MCF 10A (cell line): ENCODE measurements at regions of chr4 and their contacts with region 1.

Region 1: DNA sequence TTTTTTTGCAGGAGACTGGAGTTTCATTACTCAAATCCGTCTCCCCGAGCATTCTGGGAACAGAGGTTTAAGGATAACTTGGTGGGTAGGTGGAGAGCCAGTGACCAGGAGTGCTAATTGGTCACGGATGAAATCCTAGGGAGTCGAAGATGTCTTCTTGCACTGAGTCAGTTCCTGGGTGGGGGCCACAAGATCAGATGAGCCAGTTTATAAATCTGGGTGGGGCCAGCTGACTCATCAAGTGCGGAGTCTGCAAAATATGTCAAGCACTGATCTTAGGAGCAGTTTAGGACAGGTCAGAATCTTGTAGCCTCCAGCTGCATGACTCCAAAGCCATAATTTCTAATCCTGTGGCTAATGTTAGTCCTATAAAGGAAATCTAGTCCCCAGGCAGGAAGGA is 741.3 kb downstream of the PCDH7 start:
- DNase-seq: peak; percentile 75
- H3K4me3 Mint-ChIP-seq: peak overlapping the region; percentile 24
- H3K27ac Mint-ChIP-seq: peak overlapping the region; percentile 18
- H3K4me1 Mint-ChIP-seq: peaks cover 11% of the 10 kb centered on the region
- H3K27me3 Mint-ChIP-seq: no peaks in the 10 kb centered on the region
- CTCF ChIP-seq: no peak

Region 2: GRCh38 chr4:31474221-31474620 is 12.8 kb after region 1 on chr4:
- CTCF ChIA-PET with region 1: no interaction called
- POLR2A ChIA-PET with region 1: no interaction called
- intact Hi-C with region 1: no loop called
- DNase-seq: no peak
- H3K4me3 Mint-ChIP-seq: no peak overlapping the region
- H3K27ac Mint-ChIP-seq: no peak overlapping the region
- H3K4me1 Mint-ChIP-seq: no peaks in the 10 kb centered on the region
- H3K27me3 Mint-ChIP-seq: no peaks in the 10 kb centered on the region
- CTCF ChIP-seq: no peak

Region 3: GRCh38 chr4:32010221-32010620 is 548.8 kb after region 1 on chr4:
- CTCF ChIA-PET with region 1: no interaction called
- POLR2A ChIA-PET with region 1: no interaction called
- intact Hi-C with region 1: no loop called
- DNase-seq: no peak
- H3K4me3 Mint-ChIP-seq: no peak overlapping the region
- H3K27ac Mint-ChIP-seq: no peak overlapping the region
- H3K4me1 Mint-ChIP-seq: no peaks in the 10 kb centered on the region
- H3K27me3 Mint-ChIP-seq: no peaks in the 10 kb centered on the region
- CTCF ChIP-seq: no peak

Region 4: GRCh38 chr4:32258986-32259385 is 797.6 kb after region 1 on chr4:
- CTCF ChIA-PET with region 1: no interaction called
- POLR2A ChIA-PET with region 1: no interaction called
- intact Hi-C with region 1: loop called (anchors 5 kb)
- DNase-seq: no peak
- H3K4me3 Mint-ChIP-seq: no peak overlapping the region
- H3K27ac Mint-ChIP-seq: no peak overlapping the region
- H3K4me1 Mint-ChIP-seq: no peaks in the 10 kb centered on the region
- H3K27me3 Mint-ChIP-seq: no peaks in the 10 kb centered on the region
- CTCF ChIP-seq: no peak